CD14-positive monocyte (primary cell): ENCODE measurements at regions of chr4 and their contacts with region 1.

Region 1: DNA sequence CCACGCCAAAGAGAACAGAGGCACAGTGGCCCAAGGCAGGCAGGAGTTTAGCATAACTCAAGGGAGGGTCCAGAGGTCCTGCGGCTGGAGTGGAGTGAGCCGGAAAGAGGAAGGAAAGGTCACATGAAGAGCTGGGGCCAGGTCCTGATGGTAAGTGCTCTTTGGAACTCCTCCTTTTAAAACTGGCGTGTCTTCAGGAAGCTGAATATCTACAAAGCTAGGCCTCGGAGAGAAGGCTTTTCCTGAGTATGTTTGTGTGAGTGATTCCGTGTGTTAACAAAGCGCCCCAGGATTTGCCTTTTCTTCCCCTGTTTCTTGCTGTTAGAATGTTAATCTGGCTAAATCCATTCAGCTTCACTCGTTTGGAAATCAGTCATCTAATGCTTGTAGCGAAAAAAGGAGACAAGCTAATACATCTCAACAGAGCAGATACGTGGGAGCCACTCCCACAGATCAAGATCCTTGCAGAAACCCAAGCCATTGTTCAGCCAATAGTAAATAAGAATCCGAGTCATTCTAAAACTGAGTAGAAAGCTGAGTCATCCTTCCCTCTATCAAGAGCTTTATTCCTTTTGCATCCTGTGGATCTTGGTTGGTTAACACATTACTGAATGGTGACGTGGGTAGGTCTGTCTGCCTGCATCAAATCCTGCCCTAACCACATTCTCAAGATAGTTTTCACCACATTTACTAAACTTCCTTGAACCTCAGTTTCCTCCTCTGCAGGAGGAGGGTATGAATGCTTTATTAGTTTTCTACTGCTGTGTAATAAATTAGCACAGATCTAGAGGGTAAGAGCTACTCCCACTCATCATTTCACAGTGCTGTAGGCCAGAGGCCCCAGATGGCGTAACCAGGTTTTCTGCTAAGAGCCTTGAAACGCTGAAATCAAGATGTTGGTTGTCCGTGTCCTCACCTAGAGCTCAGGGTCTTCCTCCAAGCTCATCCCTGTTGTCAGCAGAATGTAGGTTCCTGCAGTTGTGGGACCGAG is 43.2 kb upstream of the RBM47 start:
- DNase-seq: peak; percentile 73 to 89 (median 84)
- H3K4me3 ChIP-seq: peak overlapping the region in 1 of 3 experiments; percentile 53
- H3K4me3 Mint-ChIP-seq: peak overlapping the region; percentile 57 to 78
- H3K27ac ChIP-seq: peak overlapping the region; percentile 79 to 88
- H3K27ac Mint-ChIP-seq: peak overlapping the region; percentile 94 to 98 (median 97)
- H3K4me1 ChIP-seq: peaks cover 27 to 32% of the 10 kb centered on the region in 2 donors
- H3K4me1 Mint-ChIP-seq: peaks cover 32% of the 10 kb centered on the region
- H3K27me3 ChIP-seq: no peaks in the 10 kb centered on the region
- H3K27me3 Mint-ChIP-seq: no peaks in the 10 kb centered on the region
- CTCF ChIP-seq: no peak

Region 2: GRCh38 chr4:40731792-40732245 is 59.0 kb after region 1 on chr4:
- intact Hi-C with region 1: loop called in 1 of 2 experiments (anchors 1 kb)
- DNase-seq: peak; percentile 89 to 95 (median 94)
- H3K4me3 ChIP-seq: peak overlapping the region in 2 of 3 experiments; percentile 22 to 64
- H3K4me3 Mint-ChIP-seq: peak overlapping the region; percentile 66 to 84
- H3K27ac ChIP-seq: peak overlapping the region; percentile 94 to 97
- H3K27ac Mint-ChIP-seq: peak overlapping the region; percentile 97 to 100 (median 99)
- H3K4me1 ChIP-seq: peaks cover 60 to 68% of the 10 kb centered on the region in 2 donors
- H3K4me1 Mint-ChIP-seq: peaks cover 59% of the 10 kb centered on the region
- H3K27me3 ChIP-seq: no peaks in the 10 kb centered on the region
- H3K27me3 Mint-ChIP-seq: peaks cover 0 to 4% (median 0%) of the 10 kb centered on the region in 3 donors
- CTCF ChIP-seq: no peak